PC-9 (cell line): ENCODE measurements at regions of chr2 and their contacts with region 1.

Region 1: DNA sequence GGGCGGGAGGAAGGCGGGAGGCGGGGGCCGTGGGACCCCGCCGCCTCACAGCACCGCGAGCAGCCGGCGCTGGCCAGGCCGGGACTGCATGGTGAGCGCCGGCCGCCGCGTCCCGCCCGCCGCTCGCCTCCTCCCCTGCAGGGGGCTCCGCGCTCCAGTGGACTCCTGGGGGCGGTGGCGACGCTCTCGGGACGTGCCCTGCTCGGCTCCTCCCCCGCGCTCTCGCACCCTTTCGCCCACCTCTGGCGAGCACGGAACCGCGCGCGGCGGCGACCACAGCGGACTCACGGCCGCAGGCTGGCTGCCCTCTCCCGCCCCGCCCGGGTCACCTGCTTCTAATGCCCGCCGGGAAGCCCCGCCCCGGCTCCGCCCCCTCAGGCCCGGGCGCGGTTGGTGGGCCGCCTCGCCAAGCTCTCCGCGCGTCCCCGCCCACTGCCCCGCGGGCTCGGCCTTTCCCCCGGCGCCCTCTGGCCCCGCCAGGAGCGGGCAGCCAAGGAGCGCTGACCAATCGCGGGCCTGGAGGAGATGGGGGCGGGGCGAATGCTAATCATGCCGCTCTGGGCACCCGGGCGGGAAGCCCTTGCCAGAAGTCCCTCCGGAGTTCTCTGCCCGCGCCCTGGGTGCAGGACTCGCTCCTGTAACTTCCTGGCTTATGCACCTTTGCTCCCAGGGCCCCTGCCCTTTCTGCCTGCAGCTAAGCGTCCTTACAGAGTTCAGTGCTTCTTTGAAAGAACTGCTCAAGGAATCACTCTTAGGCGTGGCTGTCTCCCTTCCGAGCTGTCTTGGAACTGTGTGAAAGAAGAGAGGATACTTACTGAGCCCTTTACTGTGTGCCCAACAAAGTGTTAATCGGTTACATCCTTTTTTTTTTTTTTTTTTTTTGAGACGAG is at the start of gene FZD5:
- DNase-seq: peak; percentile 86 to 98
- H3K4me3 ChIP-seq: peak within 1 kb of the TSS; percentile 71
- H3K27ac ChIP-seq: 0 out of 2 replicates have a peak within 1 kb of the TSS, but pooled peaks have one; percentile 20
- H3K4me1 ChIP-seq: peaks cover 21% of the 10 kb centered on the region
- H3K27me3 ChIP-seq: no peaks in the 10 kb centered on the region
- CTCF ChIP-seq: no peak
- total RNA-seq, gene FZD5: 5.6 and 6.8 TPM in 2 replicates

Region 2: DNA sequence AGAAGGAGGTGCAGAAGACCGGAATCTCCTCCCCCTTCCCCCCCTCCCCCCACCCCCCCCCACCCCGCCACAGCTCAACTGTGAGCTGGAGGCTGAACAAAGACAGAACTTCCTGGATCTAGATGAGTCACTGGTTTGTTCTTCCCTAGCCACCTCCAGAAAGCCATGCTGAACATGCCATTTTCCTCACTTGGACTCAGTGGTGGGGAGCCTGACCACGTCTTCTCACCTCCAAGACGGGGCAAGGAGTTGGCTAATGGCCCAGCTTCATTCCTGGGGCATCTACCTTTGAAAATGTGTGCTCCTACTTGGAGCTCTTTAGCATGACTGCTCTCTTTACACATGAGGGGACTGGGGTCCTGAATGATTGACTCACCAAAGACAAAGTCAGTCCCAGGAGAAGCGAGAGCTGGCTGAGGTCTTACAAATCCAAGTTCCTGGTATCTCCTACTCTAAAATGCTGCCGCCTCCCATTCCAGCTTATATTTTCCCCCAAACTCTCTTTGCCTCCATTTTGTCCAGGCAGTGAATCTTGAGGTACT is 22.5 kb after region 1 on chr2:
- CTCF ChIA-PET with region 1: interaction called, 14 read pairs
- POLR2A ChIA-PET with region 1: interaction called, 35 read pairs
- intact Hi-C with region 1: no loop called
- DNase-seq: peak; percentile 49 to 75
- H3K4me3 ChIP-seq: no peak overlapping the region
- H3K27ac ChIP-seq: peak overlapping the region; percentile 69
- H3K4me1 ChIP-seq: peaks cover 20% of the 10 kb centered on the region
- H3K27me3 ChIP-seq: no peaks in the 10 kb centered on the region
- CTCF ChIP-seq: no peak

Region 3: GRCh38 chr2:207833251-207833751 is 63.5 kb after region 1 on chr2:
- CTCF ChIA-PET with region 1: no interaction called
- POLR2A ChIA-PET with region 1: no interaction called
- intact Hi-C with region 1: loop called (anchors 5 kb)
- DNase-seq: no peak
- H3K4me3 ChIP-seq: no peak overlapping the region
- H3K27ac ChIP-seq: no peak overlapping the region
- H3K4me1 ChIP-seq: peaks cover 16% of the 10 kb centered on the region
- H3K27me3 ChIP-seq: no peaks in the 10 kb centered on the region
- CTCF ChIP-seq: no peak

Region 4: DNA sequence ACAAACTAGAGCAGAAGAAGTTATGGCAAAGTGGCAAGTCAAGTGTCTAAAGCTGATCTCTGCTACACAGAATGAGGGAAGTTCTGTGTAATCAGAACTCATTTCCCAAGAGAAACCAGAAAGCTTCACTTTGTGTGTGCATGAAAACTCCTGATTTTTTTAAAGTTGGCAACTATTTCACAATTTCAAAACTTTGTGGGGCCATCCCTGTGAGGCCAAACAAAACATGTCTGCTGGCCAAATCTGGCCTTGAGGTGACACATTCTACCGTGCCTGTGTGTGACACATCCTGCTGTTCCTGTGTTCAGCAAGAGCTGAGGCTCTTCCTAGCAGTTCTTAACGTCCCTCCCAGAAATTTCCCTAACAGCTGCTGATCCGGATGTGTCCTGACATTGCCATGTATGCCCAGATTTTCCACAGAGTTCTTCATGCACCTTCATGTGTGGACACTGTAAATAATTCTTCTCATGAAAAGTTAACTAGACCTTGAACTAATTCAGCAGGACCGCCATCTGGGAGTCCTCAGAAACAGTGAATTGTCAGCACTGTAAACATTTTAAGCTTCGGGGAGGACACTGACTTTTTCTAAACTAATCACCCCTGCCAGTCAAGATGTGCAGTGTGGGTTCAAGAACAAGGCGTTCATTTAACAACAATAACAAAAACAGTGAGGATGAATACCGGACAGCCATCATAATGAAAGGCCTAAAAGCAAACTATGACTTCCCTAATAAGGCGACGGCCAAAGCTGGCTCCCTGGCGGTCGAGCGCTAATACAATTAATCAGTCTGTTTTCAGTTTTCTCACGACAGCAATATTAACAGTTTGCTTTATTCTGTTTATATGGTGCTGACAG is 156.5 kb after region 1 on chr2:
- CTCF ChIA-PET with region 1: no interaction called
- POLR2A ChIA-PET with region 1: no interaction called
- intact Hi-C with region 1: no loop called
- DNase-seq: no peak
- H3K4me3 ChIP-seq: no peak overlapping the region
- H3K27ac ChIP-seq: no peak overlapping the region
- H3K4me1 ChIP-seq: no peaks in the 10 kb centered on the region
- H3K27me3 ChIP-seq: no peaks in the 10 kb centered on the region
- CTCF ChIP-seq: no peak

Region 5: GRCh38 chr2:207974216-207974605 is 204.4 kb after region 1 on chr2:
- CTCF ChIA-PET with region 1: interaction called, 5 read pairs
- POLR2A ChIA-PET with region 1: interaction called, 5 read pairs
- intact Hi-C with region 1: loop called (anchors 5 kb)
- DNase-seq: peak; percentile 13 to 88
- H3K4me3 ChIP-seq: no peak overlapping the region
- H3K27ac ChIP-seq: peak overlapping the region; percentile 32; the same call in 1 of the 2 replicates
- H3K4me1 ChIP-seq: peaks cover 13% of the 10 kb centered on the region
- H3K27me3 ChIP-seq: no peaks in the 10 kb centered on the region
- CTCF ChIP-seq: no peak

Region 6: DNA sequence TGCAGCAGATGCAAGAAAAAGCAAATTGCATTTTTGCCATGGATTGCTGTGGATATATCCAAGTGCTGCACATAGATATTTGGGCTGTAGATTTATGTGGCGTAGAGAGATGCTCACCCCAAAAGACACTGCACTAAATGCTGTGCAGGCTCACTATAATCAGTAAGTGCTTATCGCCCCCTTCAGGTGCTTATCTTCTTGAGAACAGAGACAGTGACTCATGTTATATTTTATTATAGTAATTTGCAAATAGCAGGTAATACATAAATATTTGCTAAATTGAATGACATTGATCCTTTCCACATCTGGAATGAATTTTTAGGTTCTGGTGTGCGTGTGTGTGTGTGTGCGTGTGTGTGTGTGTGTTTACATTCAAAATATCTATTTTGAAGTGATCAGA is 292.3 kb after region 1 on chr2:
- CTCF ChIA-PET with region 1: no interaction called
- POLR2A ChIA-PET with region 1: no interaction called
- intact Hi-C with region 1: loop called (anchors 2 kb)
- DNase-seq: peak in 1 of 2 experiments; percentile 35
- H3K4me3 ChIP-seq: no peak overlapping the region
- H3K27ac ChIP-seq: no peak overlapping the region
- H3K4me1 ChIP-seq: peaks cover 8% of the 10 kb centered on the region
- H3K27me3 ChIP-seq: no peaks in the 10 kb centered on the region
- CTCF ChIP-seq: peak; percentile 63